CD4-positive, alpha-beta memory T cell (primary cell): ENCODE measurements at regions of chr14 and their contacts with region 1.

Region 1: DNA sequence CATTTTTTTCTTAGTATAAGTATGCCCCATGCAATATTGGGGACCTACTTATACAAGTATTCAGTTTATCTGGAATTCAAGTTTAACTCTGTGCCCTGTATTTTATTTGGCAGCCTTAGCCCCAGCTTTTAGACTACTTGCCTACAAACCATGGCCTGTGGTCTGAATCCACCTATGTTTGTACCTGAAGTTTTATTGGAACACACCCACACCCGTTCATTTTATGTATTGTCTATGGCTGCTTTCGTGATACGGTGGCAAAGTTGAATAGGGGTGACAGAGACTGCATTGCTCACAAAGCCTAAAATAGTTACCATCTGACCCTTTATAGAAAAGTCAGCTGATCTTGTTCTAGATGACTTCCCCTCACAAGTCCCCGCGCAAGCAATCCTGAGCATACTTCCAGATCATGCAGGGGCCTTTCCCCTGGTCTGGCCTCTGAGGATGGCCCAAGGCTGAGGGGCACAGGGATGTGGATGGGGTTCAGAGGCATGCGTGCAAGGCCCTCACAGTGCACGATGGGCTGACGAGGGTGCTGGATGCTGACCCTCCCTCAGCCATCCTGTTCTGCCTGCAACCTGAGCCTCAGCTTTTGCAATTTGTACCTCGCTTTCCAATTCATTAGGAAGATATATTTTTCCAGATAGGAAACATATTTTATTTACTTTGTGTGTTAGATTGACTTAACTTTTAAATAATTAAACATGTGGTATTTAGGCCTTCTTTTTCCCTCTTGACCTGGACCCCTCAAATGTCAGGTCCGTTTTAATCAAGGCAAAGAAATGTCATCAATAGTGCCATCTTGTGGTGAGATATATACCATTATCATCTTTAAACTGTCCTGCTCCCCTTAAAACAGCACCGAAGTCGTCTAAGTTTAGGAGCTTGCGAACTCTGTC is 527.3 kb upstream of the CCDC196 start:
- DNase-seq: peak in 4 of 5 donors; percentile 30 to 47 (median 45)
- H3K4me3 ChIP-seq: no peak overlapping the region
- H3K4me3 Mint-ChIP-seq: no peak overlapping the region
- H3K27ac ChIP-seq: no peak overlapping the region
- H3K27ac Mint-ChIP-seq: no peak overlapping the region
- H3K4me1 ChIP-seq: peaks cover 23% of the 10 kb centered on the region
- H3K4me1 Mint-ChIP-seq: peaks cover 18 to 32% (median 24%) of the 10 kb centered on the region in 4 donors
- H3K27me3 ChIP-seq: no peaks in the 10 kb centered on the region
- H3K27me3 Mint-ChIP-seq: no peaks in the 10 kb centered on the region

Region 2: DNA sequence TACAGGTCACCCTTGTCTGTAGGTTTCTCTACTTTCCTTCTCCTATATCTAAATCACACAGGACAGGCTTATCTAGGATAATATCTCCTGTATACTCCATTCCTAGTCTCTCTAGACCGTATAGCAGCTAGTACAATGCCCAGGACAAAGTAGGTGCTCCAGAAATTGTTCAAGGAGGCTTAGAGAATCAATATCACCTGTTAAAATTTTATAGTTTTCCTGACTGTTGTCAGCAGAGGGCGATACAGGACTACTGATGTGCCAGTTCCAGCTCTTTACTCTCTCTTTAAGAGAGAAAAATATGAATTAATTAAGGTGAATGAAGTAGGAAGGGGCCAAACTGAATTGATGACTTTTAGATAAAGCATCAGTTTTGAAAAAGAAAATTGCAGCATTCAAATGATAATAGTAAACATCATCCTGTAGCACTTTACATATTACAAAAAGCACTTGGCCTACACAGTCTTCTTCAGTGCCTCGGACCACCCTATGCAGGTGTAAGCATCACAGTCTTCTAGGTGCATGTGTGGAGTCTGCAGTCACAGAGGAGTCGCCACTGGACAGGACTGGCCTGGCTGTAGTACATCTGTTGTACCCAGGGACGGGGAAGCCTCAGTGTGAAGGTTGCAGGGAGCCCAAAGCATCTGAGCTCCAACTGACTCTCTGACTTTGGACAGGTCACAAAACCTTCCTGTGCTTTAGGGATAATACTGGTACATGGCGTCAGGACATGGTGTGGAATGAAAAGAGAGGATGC is 794.7 kb before region 1 on chr14:
- CTCF ChIA-PET with region 1: interaction called, 35 read pairs
- POLR2A ChIA-PET with region 1: interaction called, 3 read pairs
- intact Hi-C with region 1: loop called (anchors 1 kb)
- DNase-seq: peak in 4 of 5 donors; percentile 57 to 64 (median 59)
- H3K4me3 ChIP-seq: no peak overlapping the region
- H3K4me3 Mint-ChIP-seq: no peak overlapping the region
- H3K27ac ChIP-seq: no peak overlapping the region
- H3K27ac Mint-ChIP-seq: no peak overlapping the region
- H3K4me1 ChIP-seq: no peaks in the 10 kb centered on the region
- H3K4me1 Mint-ChIP-seq: peaks cover 0 to 7% (median 5%) of the 10 kb centered on the region in 4 donors
- H3K27me3 ChIP-seq: no peaks in the 10 kb centered on the region
- H3K27me3 Mint-ChIP-seq: no peaks in the 10 kb centered on the region

Region 3: DNA sequence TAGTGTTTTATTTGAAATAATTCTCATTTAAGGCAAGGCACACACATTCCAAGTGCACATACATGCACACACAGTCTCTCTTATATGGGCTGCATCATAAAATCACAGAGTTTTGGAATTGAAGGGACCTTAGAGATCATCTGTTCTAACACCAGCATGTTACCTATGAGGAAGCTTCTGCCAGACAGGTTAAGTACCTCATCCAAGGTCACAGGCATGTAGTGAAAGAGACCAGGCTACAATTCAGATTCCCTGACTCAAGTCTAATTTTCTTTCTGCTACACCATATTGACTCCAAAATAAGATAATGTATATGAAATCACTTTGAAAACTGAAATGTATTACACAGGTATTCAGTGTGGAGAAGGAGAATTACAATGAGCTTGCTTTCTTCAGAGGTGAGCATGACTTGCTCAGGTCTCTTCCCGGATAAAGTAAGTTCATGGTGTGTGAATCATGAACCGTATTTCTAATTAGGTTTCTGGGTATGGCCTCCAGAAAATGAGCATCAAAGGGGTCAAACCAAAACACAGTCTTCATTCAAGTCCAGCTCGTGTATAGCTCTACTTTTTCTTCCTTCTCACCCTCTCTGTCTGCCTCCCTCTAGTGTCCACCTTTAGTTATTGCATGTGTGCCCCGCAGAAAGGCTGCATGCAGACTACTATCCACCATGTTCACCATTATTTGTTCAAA is 134.5 kb before region 1 on chr14:
- CTCF ChIA-PET with region 1: interaction called, 182 read pairs
- POLR2A ChIA-PET with region 1: interaction called, 13 read pairs
- intact Hi-C with region 1: loop called (anchors 1 kb)
- DNase-seq: peak; percentile 62 to 70 (median 64)
- H3K4me3 ChIP-seq: no peak overlapping the region
- H3K4me3 Mint-ChIP-seq: peak overlapping the region in 1 of 8 donors; percentile 10
- H3K27ac ChIP-seq: no peak overlapping the region
- H3K27ac Mint-ChIP-seq: no peak overlapping the region
- H3K4me1 ChIP-seq: peaks cover 9% of the 10 kb centered on the region
- H3K4me1 Mint-ChIP-seq: peaks cover 10 to 14% (median 11%) of the 10 kb centered on the region in 4 donors
- H3K27me3 ChIP-seq: no peaks in the 10 kb centered on the region
- H3K27me3 Mint-ChIP-seq: no peaks in the 10 kb centered on the region

Region 4: DNA sequence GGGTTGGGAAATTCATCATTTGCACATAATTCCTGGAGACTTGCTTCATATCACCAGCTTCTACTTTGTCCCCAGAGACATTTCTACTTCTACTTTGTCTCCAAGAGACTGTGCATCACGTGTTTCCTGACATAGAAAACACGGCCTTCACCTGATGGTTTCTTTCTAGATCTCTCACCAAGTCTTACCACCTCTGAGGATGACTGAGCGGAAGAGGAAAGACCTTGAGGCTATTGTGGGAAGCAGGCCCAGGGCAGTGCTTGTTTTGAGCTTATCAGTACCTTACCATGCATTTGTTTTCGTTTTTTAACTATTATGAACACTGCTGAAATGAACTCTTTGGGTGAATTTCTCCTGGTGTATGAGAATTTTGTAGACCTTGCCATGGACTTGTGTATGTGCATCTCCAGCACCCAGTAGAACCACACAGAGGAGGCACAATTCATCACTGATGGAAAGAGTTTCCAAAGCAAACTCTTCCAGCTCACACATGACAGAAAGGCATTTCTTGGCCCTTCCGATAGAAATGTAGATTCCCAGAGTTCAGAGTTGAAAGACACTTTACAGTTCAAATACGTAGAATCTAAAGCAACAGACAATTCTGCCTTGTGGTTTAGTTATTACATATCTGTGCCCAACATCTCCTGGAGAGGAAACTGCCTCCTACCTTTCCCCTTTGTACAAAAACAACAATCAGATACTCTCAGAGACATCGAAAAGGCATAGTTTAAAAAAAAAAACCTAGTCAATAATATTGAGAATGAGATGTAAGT is 111.7 kb before region 1 on chr14:
- CTCF ChIA-PET with region 1: interaction called, 46 read pairs
- POLR2A ChIA-PET with region 1: interaction called, 15 read pairs
- intact Hi-C with region 1: no loop called
- DNase-seq: peak; percentile 88 to 93 (median 90)
- H3K4me3 ChIP-seq: peak overlapping the region; percentile 30 to 43
- H3K4me3 Mint-ChIP-seq: peak overlapping the region; percentile 65 to 90 (median 80)
- H3K27ac ChIP-seq: peak overlapping the region; percentile 57
- H3K27ac Mint-ChIP-seq: peak overlapping the region; percentile 91 to 98 (median 96)
- H3K4me1 ChIP-seq: peaks cover 98% of the 10 kb centered on the region
- H3K4me1 Mint-ChIP-seq: peaks cover 64 to 92% (median 79%) of the 10 kb centered on the region in 4 donors
- H3K27me3 ChIP-seq: no peaks in the 10 kb centered on the region
- H3K27me3 Mint-ChIP-seq: no peaks in the 10 kb centered on the region

Region 5: DNA sequence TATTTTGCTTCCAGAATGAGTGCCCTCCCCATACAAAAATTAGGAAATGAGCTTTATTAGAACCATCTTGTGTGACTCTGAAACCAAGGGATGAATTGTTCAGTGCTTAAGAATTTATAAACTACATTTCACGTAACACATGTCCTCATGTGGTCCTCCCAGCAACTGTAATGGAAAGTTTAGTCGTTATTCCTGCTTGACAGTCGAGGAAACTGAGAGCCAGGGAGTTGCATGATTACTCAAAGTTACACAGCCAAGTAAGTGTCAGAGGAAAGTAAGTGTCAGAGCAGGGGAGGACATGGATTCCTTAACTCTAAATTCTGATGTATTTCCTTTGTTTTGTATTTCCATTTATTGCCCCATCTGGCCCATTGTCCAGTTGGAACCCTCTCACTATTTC is 92.5 kb before region 1 on chr14:
- CTCF ChIA-PET with region 1: interaction called, 20 read pairs
- POLR2A ChIA-PET with region 1: no interaction called
- intact Hi-C with region 1: no loop called
- DNase-seq: no peak
- H3K4me3 ChIP-seq: no peak overlapping the region
- H3K4me3 Mint-ChIP-seq: no peak overlapping the region
- H3K27ac ChIP-seq: no peak overlapping the region
- H3K27ac Mint-ChIP-seq: no peak overlapping the region
- H3K4me1 ChIP-seq: peaks cover 33% of the 10 kb centered on the region
- H3K4me1 Mint-ChIP-seq: peaks cover 31 to 47% (median 37%) of the 10 kb centered on the region in 4 donors
- H3K27me3 ChIP-seq: no peaks in the 10 kb centered on the region
- H3K27me3 Mint-ChIP-seq: no peaks in the 10 kb centered on the region

Region 6: GRCh38 chr14:65940056-65940733 is 18.7 kb before region 1 on chr14:
- CTCF ChIA-PET with region 1: interaction called, 45 read pairs
- POLR2A ChIA-PET with region 1: interaction called, 3 read pairs
- intact Hi-C with region 1: no loop called
- DNase-seq: no peak
- H3K4me3 ChIP-seq: no peak overlapping the region
- H3K4me3 Mint-ChIP-seq: no peak overlapping the region
- H3K27ac ChIP-seq: no peak overlapping the region
- H3K27ac Mint-ChIP-seq: no peak overlapping the region
- H3K4me1 ChIP-seq: peaks cover 58% of the 10 kb centered on the region
- H3K4me1 Mint-ChIP-seq: peaks cover 31 to 65% (median 55%) of the 10 kb centered on the region in 4 donors
- H3K27me3 ChIP-seq: no peaks in the 10 kb centered on the region
- H3K27me3 Mint-ChIP-seq: no peaks in the 10 kb centered on the region